Panc1 (cell line): ENCODE measurements at regions of chr7 and their contacts with region 1.

Region 1: DNA sequence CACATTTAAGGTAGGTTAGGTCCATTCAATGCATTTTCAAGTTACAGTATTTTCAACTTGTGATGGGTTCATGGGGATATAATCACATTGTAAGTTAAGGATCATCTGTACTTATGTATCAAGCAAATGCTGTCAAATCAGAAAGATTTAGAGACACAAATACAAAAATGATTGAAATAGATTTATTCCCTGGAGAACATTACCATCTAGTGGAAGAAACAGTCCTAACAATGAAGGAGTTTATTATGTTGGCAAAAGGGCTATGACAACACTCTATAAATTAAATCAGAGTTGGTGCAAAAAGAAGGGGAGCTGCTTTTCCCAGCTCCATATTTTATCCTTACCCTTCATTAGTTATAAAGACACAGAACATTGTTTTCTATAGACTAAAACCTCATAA is 69.0 kb downstream of the PRSS58 start:
- DNase-seq: no peak
- ATAC-seq: no peak
- H3K4me3 ChIP-seq: no peak overlapping the region
- H3K27ac ChIP-seq: no peak overlapping the region
- H3K4me1 ChIP-seq: no peaks in the 10 kb centered on the region
- H3K27me3 ChIP-seq: no peaks in the 10 kb centered on the region
- CTCF ChIP-seq: peak; percentile 38; the same call in 1 of the 2 replicates

Region 2: DNA sequence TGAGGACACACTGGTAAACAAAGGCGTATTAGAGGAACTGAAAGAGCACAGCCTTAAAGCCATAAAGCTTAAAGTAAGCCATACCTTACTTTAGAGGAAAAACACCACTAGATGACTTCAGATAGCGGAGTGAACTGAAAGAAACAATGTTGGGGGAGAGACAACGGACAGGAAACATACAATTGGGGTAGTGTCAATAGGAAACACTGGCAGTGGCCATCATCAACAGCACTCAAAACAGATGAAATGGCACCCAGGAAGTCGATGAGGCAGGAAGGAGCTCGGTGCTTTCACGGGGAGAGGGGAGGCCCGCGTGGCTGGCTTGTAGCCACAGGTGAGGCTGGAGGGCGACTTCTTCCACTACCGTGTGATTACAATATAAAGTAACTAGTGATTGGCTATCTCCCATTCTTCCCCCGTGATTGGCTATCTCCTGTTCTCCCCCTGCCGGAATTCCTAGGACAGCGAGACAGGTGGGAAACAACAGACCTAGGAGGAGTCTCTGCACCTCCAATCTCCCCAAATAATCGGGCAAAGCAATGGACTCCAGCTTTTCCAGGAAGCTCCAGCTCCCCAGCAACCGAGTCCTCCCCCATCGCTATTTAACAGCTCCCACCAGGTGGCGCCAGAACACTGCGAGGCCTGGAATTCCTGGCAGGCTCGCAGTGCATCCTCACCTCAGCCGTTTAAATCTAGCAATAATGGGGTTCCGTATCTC is 212.9 kb before region 1 on chr7:
- CTCF ChIA-PET with region 1: interaction called, 3 read pairs
- POLR2A ChIA-PET with region 1: no interaction called
- in situ Hi-C with region 1: no loop called
- intact Hi-C with region 1: loop called (anchors 1 kb)
- DNase-seq: peak; percentile 38
- ATAC-seq: peak; percentile 91
- H3K4me3 ChIP-seq: peak overlapping the region; percentile 25 to 29; a peak in 3 of 4 replicates
- H3K27ac ChIP-seq: no peak overlapping the region
- H3K4me1 ChIP-seq: no peaks in the 10 kb centered on the region
- H3K27me3 ChIP-seq: no peaks in the 10 kb centered on the region; the same call in 1 of the 2 replicates
- CTCF ChIP-seq: peak; percentile 92

Region 3: GRCh38 chr7:142248166-142249160 is 59.6 kb after region 1 on chr7:
- CTCF ChIA-PET with region 1: no interaction called
- POLR2A ChIA-PET with region 1: no interaction called
- in situ Hi-C with region 1: no loop called
- intact Hi-C with region 1: no loop called
- DNase-seq: no peak
- ATAC-seq: no peak
- H3K4me3 ChIP-seq: no peak overlapping the region
- H3K27ac ChIP-seq: no peak overlapping the region
- H3K4me1 ChIP-seq: no peaks in the 10 kb centered on the region
- H3K27me3 ChIP-seq: no peaks in the 10 kb centered on the region
- CTCF ChIP-seq: no peak

Region 4: GRCh38 chr7:142697270-142697669 is 508.4 kb after region 1 on chr7:
- CTCF ChIA-PET with region 1: no interaction called
- POLR2A ChIA-PET with region 1: no interaction called
- in situ Hi-C with region 1: no loop called
- intact Hi-C with region 1: no loop called
- DNase-seq: no peak
- ATAC-seq: no peak
- H3K4me3 ChIP-seq: no peak overlapping the region
- H3K27ac ChIP-seq: no peak overlapping the region
- H3K4me1 ChIP-seq: no peaks in the 10 kb centered on the region
- H3K27me3 ChIP-seq: no peaks in the 10 kb centered on the region
- CTCF ChIP-seq: no peak